AG04450 (cell line): ENCODE measurements at regions of chr15 and their contacts with region 1.

Region 1: GRCh38 chr15:38440353-38441129 is 13.4 kb upstream of the FAM98B start:
- DNase-seq: peak; percentile 41
- H3K4me3 ChIP-seq: no peak overlapping the region
- H3K27ac ChIP-seq: no peak overlapping the region
- H3K27me3 ChIP-seq: peaks cover 29% of the 10 kb centered on the region
- CTCF ChIP-seq: peak; percentile 96

Region 2: DNA sequence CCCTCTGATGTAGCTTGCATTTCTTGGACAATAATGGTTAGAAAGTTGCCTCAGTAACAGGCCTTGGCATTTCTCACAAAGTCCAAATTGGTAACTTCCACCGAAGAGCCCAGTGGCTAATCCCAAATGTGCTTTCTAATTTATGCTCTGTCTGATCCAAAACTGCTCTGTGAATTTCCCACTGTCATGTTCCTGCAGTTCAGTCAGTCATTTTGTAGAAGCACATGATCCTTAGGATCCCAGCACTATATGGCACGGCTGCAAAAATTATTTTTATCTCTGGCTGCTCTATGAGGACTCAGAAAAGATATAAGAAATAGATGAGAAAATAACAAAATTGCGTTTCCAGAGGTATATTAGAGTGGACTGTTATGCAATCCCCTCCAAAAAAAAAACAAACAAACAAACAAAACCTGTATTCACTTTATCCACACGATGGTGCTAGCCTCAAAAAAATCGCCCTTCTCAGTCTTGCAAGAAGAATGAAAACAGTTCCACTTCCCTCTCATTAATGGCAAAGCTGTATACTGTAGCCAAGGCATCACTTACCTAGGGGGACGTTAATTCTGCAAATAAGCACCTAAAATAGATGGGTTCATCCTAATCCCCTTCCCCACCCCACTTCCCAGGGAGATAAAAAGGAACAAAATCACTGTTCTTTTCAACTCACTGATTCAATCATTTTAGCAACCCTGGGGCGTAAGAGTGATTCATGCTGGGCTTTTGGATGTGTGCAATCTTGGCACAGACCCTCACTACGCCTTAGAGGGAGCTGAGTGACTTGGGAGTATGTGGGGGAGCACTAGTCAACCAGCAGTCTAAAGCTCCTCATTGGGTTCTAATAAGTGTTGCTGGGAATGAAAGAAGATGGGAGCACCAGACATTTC is 444.8 kb before region 1 on chr15:
- CTCF ChIA-PET with region 1: interaction called, 25 read pairs
- POLR2A ChIA-PET with region 1: no interaction called
- DNase-seq: peak; percentile 27
- H3K4me3 ChIP-seq: no peak overlapping the region; the same call in 1 of the 2 replicates
- H3K27ac ChIP-seq: no peak overlapping the region
- H3K27me3 ChIP-seq: no peaks in the 10 kb centered on the region
- CTCF ChIP-seq: peak; percentile 72

Region 3: GRCh38 chr15:38300395-38300794 is 140.1 kb before region 1 on chr15:
- CTCF ChIA-PET with region 1: no interaction called
- POLR2A ChIA-PET with region 1: no interaction called
- DNase-seq: no peak
- H3K4me3 ChIP-seq: no peak overlapping the region
- H3K27ac ChIP-seq: no peak overlapping the region
- H3K27me3 ChIP-seq: no peaks in the 10 kb centered on the region
- CTCF ChIP-seq: no peak

Region 4: GRCh38 chr15:38354315-38354929 is 86.1 kb before region 1 on chr15:
- CTCF ChIA-PET with region 1: no interaction called
- POLR2A ChIA-PET with region 1: no interaction called
- DNase-seq: peak; percentile 37
- H3K4me3 ChIP-seq: no peak overlapping the region
- H3K27ac ChIP-seq: no peak overlapping the region
- H3K27me3 ChIP-seq: no peaks in the 10 kb centered on the region
- CTCF ChIP-seq: peak; percentile 82

Region 5: GRCh38 chr15:38453971-38454695 is 13.6 kb after region 1 on chr15 and contains the start of gene FAM98B:
- CTCF ChIA-PET with region 1: interaction called, 30 read pairs
- POLR2A ChIA-PET with region 1: interaction called, 9 read pairs
- DNase-seq: peak; percentile 69
- H3K4me3 ChIP-seq: peak within 1 kb of the TSS; percentile 92
- H3K27ac ChIP-seq: peak within 1 kb of the TSS; percentile 85
- H3K27me3 ChIP-seq: no peaks in the 10 kb centered on the region
- CTCF ChIP-seq: no peak; the same call in none of the 2 replicates
- polyA plus RNA-seq, gene FAM98B: 11.4 and 19.6 TPM in 2 replicates

Region 6: GRCh38 chr15:38672814-38673670 is 232.5 kb after region 1 on chr15:
- CTCF ChIA-PET with region 1: interaction called, 11 read pairs
- POLR2A ChIA-PET with region 1: no interaction called
- DNase-seq: no peak
- H3K4me3 ChIP-seq: no peak overlapping the region
- H3K27ac ChIP-seq: no peak overlapping the region
- H3K27me3 ChIP-seq: peaks cover 36% of the 10 kb centered on the region
- CTCF ChIP-seq: no peak

Region 7: DNA sequence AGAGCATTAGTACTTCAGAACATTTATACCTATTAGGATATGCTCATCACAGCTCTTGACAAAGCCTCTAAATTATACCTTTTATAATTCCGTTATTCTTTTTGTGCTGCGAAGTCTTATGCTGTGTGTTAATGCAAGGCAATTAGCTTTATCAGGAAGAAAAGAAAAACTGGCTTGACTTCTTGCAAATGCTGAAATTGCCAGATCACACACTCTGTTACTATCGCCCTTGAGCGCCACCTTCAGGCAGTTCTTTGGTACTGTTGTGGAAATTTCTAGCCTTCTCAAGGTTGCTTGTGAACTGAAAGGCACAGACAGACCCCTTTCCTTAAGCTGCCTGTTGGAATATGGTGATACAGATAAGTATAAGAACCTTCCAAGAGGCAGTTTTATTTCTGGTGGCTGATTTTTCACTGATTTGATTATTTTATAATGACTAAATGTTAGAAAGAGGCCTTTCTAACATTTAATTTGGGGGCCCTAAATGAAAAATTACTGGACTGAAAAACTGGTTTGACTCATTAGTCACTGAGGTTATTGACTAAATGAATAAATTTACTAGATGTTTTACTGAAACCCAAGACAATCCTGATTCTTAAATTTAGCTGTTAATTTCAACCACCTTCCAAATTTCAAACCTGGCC is 250.3 kb after region 1 on chr15:
- CTCF ChIA-PET with region 1: interaction called, 133 read pairs
- POLR2A ChIA-PET with region 1: no interaction called
- DNase-seq: peak; percentile 46
- H3K4me3 ChIP-seq: no peak overlapping the region
- H3K27ac ChIP-seq: no peak overlapping the region
- H3K27me3 ChIP-seq: peaks cover 2% of the 10 kb centered on the region
- CTCF ChIP-seq: peak; percentile 85